ENCODE measurements at regions of chr14 and their contacts with region 1.

Region 1: DNA sequence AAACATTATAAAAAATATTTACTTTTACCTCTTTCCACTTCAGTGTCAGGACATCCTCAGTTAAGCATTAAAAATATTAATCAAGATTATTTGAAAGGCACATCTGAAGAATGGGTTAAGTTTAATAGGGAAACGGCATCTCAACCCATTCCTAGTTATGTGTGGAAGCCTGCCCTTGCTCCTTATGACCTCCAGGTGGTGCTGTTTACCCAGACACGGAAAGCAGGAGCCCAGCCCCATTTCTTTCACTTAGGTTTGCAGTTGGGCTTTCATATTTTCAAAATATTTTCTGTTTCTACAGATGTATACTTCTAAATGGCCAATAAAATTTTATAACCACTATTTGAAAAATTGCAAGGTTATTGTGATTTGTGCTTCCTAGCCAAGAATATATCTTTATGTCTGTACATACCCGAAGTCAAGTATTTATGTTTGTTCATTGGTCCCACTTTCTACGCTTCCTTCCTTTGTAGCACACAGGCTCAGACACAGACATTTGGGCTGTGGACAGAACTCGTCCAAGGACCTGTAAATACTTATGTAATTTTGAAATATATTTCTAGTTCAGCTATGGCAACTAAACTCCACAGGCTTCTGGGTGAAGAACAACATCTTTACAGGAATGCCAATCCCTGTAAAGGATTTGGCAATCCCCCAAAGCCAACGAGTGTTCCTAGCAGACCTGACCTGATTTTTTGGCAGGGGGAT is 247.1 kb downstream of the AKAP6 start:
- DNase-seq: peak; percentile 72
- H3K4me3 ChIP-seq: peak overlapping the region in 3 of 4 donors; percentile 21 to 39 (median 31)
- H3K27ac ChIP-seq: peak overlapping the region in 3 of 4 donors; percentile 7 to 39 (median 38)
- H3K4me1 ChIP-seq: peaks cover 0 to 25% (median 11%) of the 10 kb centered on the region in 4 donors
- H3K27me3 ChIP-seq: no peaks in the 10 kb centered on the region
- CTCF ChIP-seq: peak; percentile 84 to 94 (median 89)
- EP300 ChIP-seq: no peak
- POLR2A ChIP-seq: no peak

Region 2: DNA sequence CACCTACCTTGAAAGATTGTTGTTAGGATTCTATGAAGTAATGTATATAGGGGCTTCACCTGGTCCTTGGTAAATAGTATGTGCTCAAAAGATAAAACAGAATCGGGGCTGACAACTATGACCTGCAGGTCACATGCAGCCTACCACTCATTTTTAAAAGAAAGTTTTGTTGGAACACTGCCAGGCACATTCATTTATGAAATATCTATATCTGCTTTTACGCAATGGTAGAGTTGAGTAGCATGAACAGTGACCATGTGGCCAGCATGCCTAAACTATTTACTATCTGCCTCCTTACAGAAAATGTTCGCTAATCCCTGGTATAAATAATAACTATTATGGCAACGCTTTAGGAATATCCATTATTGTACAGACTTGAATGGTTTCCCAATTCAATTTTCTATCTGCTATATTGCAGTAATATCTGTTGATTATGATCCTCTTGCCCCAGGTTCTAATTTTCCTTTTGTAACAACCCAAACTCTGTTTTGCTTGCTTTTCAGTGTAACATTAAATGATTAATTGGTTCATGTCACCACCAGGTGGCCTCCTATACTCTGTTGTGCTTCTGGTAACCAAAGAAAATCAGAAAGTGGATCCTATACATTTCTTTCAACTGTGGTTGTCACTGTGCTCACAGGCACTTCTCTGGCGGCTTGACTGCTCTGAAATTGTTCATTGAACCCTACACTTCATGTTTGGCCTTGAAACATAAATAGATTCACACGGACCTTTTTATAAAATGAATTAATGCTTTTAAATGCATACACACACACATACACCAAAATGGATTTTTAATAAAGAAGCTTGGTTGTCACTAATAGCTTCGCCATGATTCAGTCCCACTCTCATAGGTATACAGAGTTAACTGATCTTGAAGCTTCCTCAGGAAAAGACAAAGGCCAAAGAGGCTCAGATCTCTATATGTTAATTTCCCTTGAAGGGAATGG is 134.8 kb after region 1 on chr14:
- intact Hi-C with region 1: loop called (anchors 5 kb)
- DNase-seq: no peak
- H3K4me3 ChIP-seq: peak overlapping the region; percentile 5 to 36 (median 31)
- H3K27ac ChIP-seq: peak overlapping the region; percentile 67 to 82 (median 78)
- H3K4me1 ChIP-seq: peaks cover 0 to 48% (median 31%) of the 10 kb centered on the region in 4 donors
- H3K27me3 ChIP-seq: no peaks in the 10 kb centered on the region
- CTCF ChIP-seq: peak in 3 of 4 experiments; percentile 46 to 53 (median 52)
- EP300 ChIP-seq: no peak
- POLR2A ChIP-seq: no peak

Region 3: GRCh38 chr14:32896979-32897697 is 320.9 kb after region 1 on chr14:
- intact Hi-C with region 1: loop called (anchors 5 kb)
- DNase-seq: no peak
- H3K4me3 ChIP-seq: peak overlapping the region; percentile 29 to 55 (median 54)
- H3K27ac ChIP-seq: peak overlapping the region; percentile 68 to 85 (median 82)
- H3K4me1 ChIP-seq: peaks cover 0 to 6% (median 3%) of the 10 kb centered on the region in 4 donors
- H3K27me3 ChIP-seq: no peaks in the 10 kb centered on the region
- CTCF ChIP-seq: no peak
- EP300 ChIP-seq: no peak
- POLR2A ChIP-seq: no peak

Region 4: GRCh38 chr14:33432407-33433023 is 856.3 kb after region 1 on chr14:
- intact Hi-C with region 1: loop called (anchors 10 kb)
- DNase-seq: no peak
- H3K4me3 ChIP-seq: no peak overlapping the region
- H3K27ac ChIP-seq: no peak overlapping the region
- H3K4me1 ChIP-seq: no peaks in the 10 kb centered on the region
- H3K27me3 ChIP-seq: no peaks in the 10 kb centered on the region
- CTCF ChIP-seq: peak in 3 of 4 experiments; percentile 14 to 37 (median 25)
- EP300 ChIP-seq: no peak
- POLR2A ChIP-seq: no peak

Region 5: DNA sequence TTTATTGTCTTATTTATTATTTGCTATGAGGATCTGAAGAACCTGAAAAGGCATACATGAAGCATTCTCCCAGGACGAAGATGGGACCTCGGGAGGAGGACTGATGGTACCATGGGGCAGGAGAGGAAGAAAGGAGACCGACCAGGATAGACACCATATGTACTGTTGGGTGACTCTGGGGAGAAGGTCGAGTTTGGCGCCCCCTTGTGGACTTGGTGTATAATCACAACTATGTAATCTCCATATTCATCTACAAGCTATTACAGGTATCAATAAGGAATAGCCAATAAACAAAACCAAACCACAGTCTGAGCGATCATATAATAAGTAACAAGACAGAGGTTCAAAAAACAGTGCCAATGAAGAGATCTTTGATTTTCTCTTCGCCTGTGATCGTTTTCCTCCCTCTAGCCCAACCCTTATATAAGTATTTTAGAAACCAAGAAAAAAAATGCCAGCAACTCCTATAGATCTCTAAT is 1746.7 kb after region 1 on chr14:
- intact Hi-C with region 1: loop called (anchors 10 kb)
- DNase-seq: peak; percentile 73
- H3K4me3 ChIP-seq: no peak overlapping the region
- H3K27ac ChIP-seq: no peak overlapping the region
- H3K4me1 ChIP-seq: peaks cover 0 to 9% (median 2%) of the 10 kb centered on the region in 4 donors
- H3K27me3 ChIP-seq: no peaks in the 10 kb centered on the region
- CTCF ChIP-seq: peak in 3 of 4 experiments; percentile 40 to 62 (median 46)
- EP300 ChIP-seq: no peak
- POLR2A ChIP-seq: no peak